ENCODE measurements at regions of chr1 and their contacts with region 1.

Region 1: GRCh38 chr1:46718727-46719622 is at the start of gene EFCAB14:
- DNase-seq: peak; percentile 84 to 93 (median 89)
- H3K4me3 ChIP-seq: peak within 1 kb of the TSS; percentile 85 to 92 (median 86)
- H3K4me3 Mint-ChIP-seq: peak within 1 kb of the TSS; percentile 93 to 98
- H3K27ac ChIP-seq: peak within 1 kb of the TSS; percentile 27 to 91
- H3K27ac Mint-ChIP-seq: peak within 1 kb of the TSS; percentile 91 to 93 (median 92)
- H3K4me1 ChIP-seq: peaks cover 25 to 27% of the 10 kb centered on the region in 2 donors
- H3K4me1 Mint-ChIP-seq: peaks cover 31% of the 10 kb centered on the region
- H3K27me3 ChIP-seq: no peaks in the 10 kb centered on the region
- H3K27me3 Mint-ChIP-seq: peaks cover 1 to 9% (median 3%) of the 10 kb centered on the region in 3 donors
- CTCF ChIP-seq: no peak
- polyA plus RNA-seq, gene EFCAB14: 31.4 to 75.5 (median 49.8) TPM

Region 2: GRCh38 chr1:46477153-46477929 is 241.6 kb before region 1 on chr1:
- intact Hi-C with region 1: loop called in 1 of 2 experiments (anchors 10 kb)
- DNase-seq: peak; percentile 73 to 86 (median 76)
- H3K4me3 ChIP-seq: no peak overlapping the region
- H3K4me3 Mint-ChIP-seq: no peak overlapping the region
- H3K27ac ChIP-seq: no peak overlapping the region
- H3K27ac Mint-ChIP-seq: peak overlapping the region in 1 of 7 donors; percentile 68
- H3K4me1 ChIP-seq: peaks cover 0 to 6% of the 10 kb centered on the region in 2 donors
- H3K4me1 Mint-ChIP-seq: peaks cover 3% of the 10 kb centered on the region
- H3K27me3 ChIP-seq: peaks cover 0 to 29% of the 10 kb centered on the region in 2 donors
- H3K27me3 Mint-ChIP-seq: peaks cover 23 to 45% (median 26%) of the 10 kb centered on the region in 3 donors
- CTCF ChIP-seq: peak; percentile 97

Region 3: DNA sequence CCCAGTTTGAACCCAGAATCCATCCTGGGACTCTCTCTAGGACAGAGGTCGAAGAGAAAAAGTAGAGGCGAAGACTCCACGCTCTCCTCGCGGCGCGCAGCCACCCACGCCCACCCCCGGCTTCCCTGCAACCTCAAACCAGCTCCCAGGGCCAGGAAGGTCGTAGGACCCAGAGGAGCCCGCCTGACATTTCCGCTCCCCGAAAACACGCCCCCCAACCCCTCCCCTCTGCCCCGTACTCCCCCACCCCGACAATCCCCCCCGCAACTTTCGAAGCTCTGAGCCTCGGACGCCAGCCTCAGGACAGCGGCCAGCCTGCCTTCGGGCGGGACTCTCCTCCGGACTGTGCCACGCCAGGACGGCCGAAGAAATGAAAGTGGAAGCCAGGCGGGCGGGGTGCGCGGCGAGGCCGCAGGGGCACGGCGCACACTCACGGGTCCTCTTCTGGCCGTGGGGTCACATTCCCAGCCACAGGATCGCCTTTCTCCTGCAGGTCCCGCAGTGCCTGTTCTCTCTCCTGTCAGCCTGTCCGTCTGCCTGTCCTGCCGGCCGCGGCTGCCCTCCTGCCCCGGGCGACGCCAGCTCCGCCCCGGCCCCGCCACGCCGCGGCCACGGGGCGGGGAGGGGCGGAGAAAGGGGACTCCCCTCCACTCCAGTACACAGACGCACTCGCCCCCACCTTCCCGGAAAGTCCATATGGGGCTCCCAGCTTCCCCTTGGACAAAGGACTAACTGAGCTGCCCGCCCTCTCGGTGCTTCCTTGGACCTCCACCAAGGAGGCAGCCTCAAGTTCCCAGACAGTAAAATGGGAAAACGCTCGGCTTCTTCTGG is 102.5 kb before region 1 on chr1 and contains the start of gene MOB3C:
- intact Hi-C with region 1: loop called in 1 of 2 experiments (anchors 10 kb)
- DNase-seq: peak; percentile 28 to 72 (median 35)
- H3K4me3 ChIP-seq: peak within 1 kb of the TSS; percentile 76 to 86 (median 82)
- H3K4me3 Mint-ChIP-seq: peak within 1 kb of the TSS; percentile 94
- H3K27ac ChIP-seq: peak within 1 kb of the TSS; percentile 54 to 80
- H3K27ac Mint-ChIP-seq: peak within 1 kb of the TSS; percentile 80 to 94 (median 88)
- H3K4me1 ChIP-seq: peaks cover 51 to 61% of the 10 kb centered on the region in 2 donors
- H3K4me1 Mint-ChIP-seq: peaks cover 65% of the 10 kb centered on the region
- H3K27me3 ChIP-seq: no peaks in the 10 kb centered on the region
- H3K27me3 Mint-ChIP-seq: peaks cover 0 to 7% (median 3%) of the 10 kb centered on the region in 3 donors
- CTCF ChIP-seq: no peak
- polyA plus RNA-seq, gene MOB3C: 5.3 to 18.1 (median 6.1) TPM

Region 4: DNA sequence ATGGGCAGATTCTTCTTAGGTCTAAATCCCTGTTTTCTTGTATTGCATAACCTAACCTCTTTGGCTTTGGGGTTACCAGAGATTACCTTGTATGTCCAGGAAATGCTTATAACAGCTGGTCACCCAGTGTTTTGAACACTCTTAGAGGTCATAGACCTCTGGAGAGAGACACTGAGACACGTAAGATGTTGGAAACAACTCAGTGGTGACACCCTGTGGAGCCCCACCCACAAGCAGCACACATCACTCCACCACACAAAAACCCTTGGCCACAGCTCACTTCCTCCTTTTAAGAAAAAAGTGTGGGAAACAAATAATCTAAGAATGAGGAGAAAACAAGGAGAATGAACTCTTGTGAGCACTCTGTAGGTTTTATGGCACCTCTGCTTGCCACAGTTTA is 53.6 kb after region 1 on chr1:
- intact Hi-C with region 1: no loop called
- DNase-seq: no peak
- H3K4me3 ChIP-seq: no peak overlapping the region
- H3K4me3 Mint-ChIP-seq: no peak overlapping the region
- H3K27ac ChIP-seq: no peak overlapping the region
- H3K27ac Mint-ChIP-seq: no peak overlapping the region
- H3K4me1 ChIP-seq: no peaks in the 10 kb centered on the region
- H3K4me1 Mint-ChIP-seq: no peaks in the 10 kb centered on the region
- H3K27me3 ChIP-seq: no peaks in the 10 kb centered on the region
- H3K27me3 Mint-ChIP-seq: no peaks in the 10 kb centered on the region
- CTCF ChIP-seq: no peak

Measured in CD14-positive monocyte (primary cell).